ENCODE measurements at regions of chr22 and their contacts with region 1.

Region 1: DNA sequence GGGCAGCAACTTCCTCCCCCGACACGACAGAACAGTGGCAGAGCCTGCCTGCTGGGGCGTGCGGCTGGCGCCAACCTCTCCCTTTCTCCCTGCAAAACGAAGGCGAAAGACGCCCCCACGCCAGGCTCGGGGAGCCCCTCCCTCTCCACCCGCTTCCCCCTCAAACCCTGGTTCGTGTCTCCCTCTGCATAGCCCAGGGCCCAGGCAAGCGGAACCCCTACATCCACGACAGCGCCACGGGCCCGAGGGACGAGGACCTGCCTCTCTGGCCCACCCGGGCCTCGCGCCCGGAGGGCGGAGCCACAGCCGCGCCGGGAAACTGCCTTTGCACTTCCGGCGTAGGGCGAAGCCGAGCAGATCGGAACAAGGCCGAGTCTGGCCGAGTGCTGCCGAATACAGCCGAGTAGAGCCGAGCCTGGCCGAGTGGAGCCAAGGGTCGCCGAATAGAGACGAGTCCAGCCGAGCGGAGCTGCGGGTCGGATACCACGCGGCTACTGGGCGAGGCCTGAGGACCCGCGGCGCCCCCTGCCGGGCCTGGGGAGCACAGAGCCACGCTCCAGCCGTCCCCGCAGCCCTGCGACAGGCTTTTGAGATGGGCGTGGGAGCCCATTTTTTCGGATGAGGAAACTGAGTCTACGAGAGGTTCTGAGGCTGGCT is 11.2 kb upstream of the C1QTNF6 start:
- DNase-seq: peak; percentile 99
- CTCF ChIP-seq: peak; percentile 94

Region 2: DNA sequence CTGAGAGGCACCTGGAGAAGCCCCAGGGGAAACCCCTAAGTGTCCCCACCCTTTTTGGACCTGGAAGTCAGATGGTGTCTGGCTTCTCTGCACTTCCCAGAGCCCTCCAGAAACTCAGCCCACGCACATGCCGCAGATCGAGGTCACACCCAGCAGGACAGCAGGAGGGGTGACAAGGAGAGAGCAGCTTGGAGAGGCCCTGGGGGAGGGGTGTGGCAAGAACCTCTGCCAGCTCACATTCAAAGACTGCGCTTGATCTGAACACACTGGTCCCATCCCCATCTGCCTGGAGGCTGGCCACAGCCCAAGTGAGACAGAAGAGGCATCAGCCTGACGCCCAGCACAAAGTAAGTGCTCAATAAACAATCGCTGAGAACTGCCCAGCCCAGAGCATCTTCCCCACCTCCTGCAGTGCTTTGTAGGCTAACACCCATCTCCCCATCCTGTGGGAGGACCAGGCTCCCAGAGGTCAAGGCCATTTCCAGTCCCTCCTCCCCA is 111.1 kb before region 1 on chr22:
- CTCF ChIA-PET with region 1: interaction called, 10 read pairs
- POLR2A ChIA-PET with region 1: no interaction called
- DNase-seq: no peak
- CTCF ChIP-seq: no peak

Region 3: GRCh38 chr22:37157516-37158289 is 41.5 kb before region 1 on chr22:
- CTCF ChIA-PET with region 1: interaction called, 83 read pairs
- POLR2A ChIA-PET with region 1: interaction called, 4 read pairs
- DNase-seq: no peak
- CTCF ChIP-seq: no peak

Region 4: GRCh38 chr22:37210041-37210803 is 11.0 kb after region 1 on chr22:
- CTCF ChIA-PET with region 1: interaction called, 62 read pairs
- POLR2A ChIA-PET with region 1: no interaction called
- DNase-seq: no peak
- CTCF ChIP-seq: no peak

Region 5: GRCh38 chr22:37229805-37230672 is 30.8 kb after region 1 on chr22:
- CTCF ChIA-PET with region 1: interaction called, 11 read pairs
- POLR2A ChIA-PET with region 1: no interaction called
- DNase-seq: peak; percentile 88
- CTCF ChIP-seq: no peak

Region 6: DNA sequence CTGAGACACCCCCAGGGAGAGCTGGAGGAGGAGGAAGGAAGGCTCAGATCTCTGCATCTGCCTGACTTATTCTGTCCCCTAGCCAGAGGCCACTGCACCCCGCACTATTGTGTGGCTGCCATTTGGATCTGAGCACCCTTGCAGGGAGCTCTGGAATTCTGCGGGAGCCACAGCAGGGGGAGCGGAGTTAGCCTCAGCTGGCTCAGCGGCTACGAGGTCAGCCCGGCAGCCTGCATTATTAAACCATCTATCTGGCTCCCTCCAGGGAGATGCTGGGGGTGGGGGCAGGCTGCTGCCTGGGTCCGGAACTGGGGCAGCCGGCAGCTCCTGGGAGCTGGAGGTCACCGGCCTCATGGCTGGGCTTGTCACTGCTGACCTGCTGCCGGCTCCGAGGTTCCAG is 234.6 kb after region 1 on chr22:
- CTCF ChIA-PET with region 1: no interaction called
- POLR2A ChIA-PET with region 1: no interaction called
- DNase-seq: no peak
- CTCF ChIP-seq: no peak